HepG2 (cell line): ENCODE measurements at regions of chr20 and their contacts with region 1.

Region 1: DNA sequence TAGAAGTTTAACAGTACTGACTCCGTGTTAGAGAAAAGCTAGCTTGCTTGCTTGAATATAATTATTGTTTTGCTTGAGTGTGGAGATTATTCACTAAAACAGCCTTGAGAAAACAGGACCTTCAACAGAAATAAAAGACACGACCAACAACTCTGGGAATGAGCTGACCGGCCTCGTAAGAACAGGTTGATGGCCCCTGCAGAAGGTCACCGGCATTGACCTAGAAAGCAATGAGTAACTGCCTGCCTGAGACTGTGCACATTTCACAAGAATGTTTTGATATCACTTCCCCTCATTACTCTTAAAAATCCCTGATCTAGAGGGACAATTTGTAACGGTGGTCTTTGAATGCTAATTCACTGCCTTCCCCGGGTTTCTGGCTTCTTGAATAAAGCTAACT is 49.4 kb downstream of the SEL1L2 start:
- DNase-seq: no peak
- ATAC-seq: no peak
- H3K4me3 ChIP-seq: no peak overlapping the region
- H3K27ac ChIP-seq: no peak overlapping the region
- H3K4me1 ChIP-seq: no peaks in the 10 kb centered on the region
- H3K27me3 ChIP-seq: no peaks in the 10 kb centered on the region
- CTCF ChIP-seq: no peak
- EP300 ChIP-seq: no peak
- POLR2A ChIP-seq: no peak
- RAD21 ChIP-seq: no peak

Region 2: DNA sequence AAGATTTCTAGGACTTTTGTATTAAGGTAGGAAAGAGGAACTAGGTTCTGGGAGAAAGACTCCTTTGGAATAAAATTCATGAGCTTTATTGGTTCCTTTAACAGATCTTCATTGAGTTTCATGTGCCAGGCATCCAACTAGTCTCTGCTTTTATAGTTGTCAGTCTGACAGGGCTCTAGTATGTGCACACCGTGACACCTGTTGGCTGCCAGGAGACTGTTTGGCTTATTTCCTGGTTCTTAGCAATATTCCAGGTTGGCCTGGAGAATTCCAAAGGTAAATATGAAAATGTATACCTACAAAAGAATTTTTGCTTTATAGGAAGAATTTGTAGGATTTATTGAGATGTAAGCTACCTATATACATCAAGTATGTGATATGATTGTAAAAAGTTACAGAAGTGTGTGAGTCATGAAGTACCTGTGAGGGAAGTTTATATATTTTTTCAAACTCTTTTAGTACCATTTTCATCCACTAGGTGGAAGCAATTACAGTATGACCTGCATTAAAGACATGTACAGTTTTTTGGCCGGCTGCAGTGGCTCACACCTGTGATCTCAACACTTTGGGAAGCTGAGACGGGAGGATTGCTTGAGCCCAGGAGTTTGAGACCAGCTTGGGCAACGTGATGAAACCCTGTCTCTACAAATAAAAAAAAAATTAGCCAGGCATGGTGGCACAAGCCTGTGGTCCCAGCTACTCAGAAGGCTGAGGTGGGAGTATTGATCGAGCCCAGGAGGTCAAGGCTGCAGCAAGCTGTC is 121.0 kb before region 1 on chr20:
- CTCF ChIA-PET with region 1: no interaction called
- POLR2A ChIA-PET with region 1: no interaction called
- in situ Hi-C with region 1: no loop called
- intact Hi-C with region 1: loop called (anchors 5 kb)
- DNase-seq: peak; percentile 70
- ATAC-seq: peak; percentile 71
- H3K4me3 ChIP-seq: no peak overlapping the region
- H3K27ac ChIP-seq: no peak overlapping the region
- H3K4me1 ChIP-seq: 0 out of 2 replicates have a peak, but pooled peaks cover under 1% of the 10 kb centered on the region
- H3K27me3 ChIP-seq: no peaks in the 10 kb centered on the region
- CTCF ChIP-seq: peak; percentile 71
- EP300 ChIP-seq: no peak
- POLR2A ChIP-seq: no peak
- RAD21 ChIP-seq: peak; percentile 35; the same call in 1 of the 2 replicates

Region 3: DNA sequence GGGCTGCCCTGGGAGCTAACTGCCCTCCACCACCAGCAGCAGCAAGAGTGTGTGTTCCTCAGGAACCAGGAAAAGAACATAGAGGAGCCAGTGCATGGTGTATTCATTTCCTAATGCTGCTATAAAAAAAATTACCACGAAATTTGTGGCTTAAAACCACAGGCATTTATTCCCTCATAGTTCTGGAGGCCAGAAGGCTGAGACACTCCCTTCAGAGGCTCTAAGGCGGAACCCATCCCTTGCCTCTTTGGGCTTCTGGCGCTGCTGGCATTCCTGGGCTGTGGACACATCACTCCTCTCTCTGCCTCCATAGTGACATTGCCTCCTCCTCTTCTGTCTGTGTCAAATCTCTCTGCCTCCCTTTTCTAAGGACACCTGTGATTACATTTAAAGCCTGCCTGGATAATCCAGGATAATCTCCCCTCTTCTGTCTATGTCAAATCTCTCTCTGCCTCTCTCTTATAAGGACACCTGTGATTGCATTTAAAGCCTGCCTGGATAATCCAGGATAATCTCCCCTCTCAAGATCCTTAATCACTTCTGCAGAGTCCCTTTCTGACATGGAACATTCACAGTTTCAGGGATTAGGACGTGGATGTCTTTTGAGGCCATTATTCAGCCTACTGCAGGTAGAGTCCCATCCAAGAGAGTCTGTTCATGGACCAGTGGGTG is 101.5 kb before region 1 on chr20:
- CTCF ChIA-PET with region 1: no interaction called
- POLR2A ChIA-PET with region 1: no interaction called
- in situ Hi-C with region 1: no loop called
- intact Hi-C with region 1: loop called (anchors 5 kb)
- DNase-seq: no peak
- ATAC-seq: peak; percentile 18; the same call in 2 of the 3 replicates
- H3K4me3 ChIP-seq: no peak overlapping the region
- H3K27ac ChIP-seq: no peak overlapping the region
- H3K4me1 ChIP-seq: no peaks in the 10 kb centered on the region
- H3K27me3 ChIP-seq: peaks cover 0 to 54% of the 10 kb centered on the region in 2 experiments; a peak in 4 of 5 replicates
- CTCF ChIP-seq: no peak
- EP300 ChIP-seq: no peak
- POLR2A ChIP-seq: no peak
- RAD21 ChIP-seq: no peak